ENCODE measurements at regions of chr13 and their contacts with region 1.

Region 1: DNA sequence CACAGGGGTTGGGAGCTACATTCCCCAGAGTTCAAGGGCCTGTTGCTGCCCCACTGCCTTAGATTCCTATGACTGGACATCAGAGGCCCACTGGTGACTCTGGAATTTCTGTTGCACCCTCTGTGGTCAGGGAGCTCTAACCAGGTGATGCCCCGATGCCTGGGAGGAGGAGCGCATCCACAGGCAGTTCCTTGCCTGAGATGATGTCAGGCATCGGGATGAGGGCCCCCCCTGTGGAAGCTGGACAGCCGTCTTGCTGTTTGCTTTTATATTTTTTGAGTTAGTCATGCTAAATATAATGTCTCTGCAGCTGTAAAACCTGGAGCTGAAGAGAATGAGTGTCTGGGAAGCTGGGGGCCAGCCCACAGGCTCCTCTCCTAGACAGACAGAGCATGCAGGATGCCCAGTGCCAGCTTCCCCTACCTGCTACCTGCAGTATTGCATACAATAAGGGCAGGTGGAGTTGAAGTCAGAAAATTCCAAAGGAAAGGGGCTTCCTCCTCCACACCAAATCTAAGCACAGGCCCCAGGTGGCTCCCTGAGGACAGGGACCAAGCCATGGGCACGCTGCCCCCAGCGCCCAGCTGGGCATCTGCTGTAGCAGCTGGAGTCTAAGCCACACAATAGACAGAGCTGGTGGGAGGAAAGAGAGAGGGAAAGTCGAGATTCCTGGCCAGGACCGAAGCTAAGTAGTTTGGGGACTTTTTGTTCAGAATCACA is 16.2 kb downstream of the COL4A2 start:
- DNase-seq: peak in 1 of 2 experiments; percentile 61
- ATAC-seq: peak; percentile 71 to 72
- H3K4me3 ChIP-seq: no peak overlapping the region
- H3K27ac ChIP-seq: peak overlapping the region; percentile 82 to 85
- H3K4me1 ChIP-seq: peaks cover 79% of the 10 kb centered on the region
- CTCF ChIP-seq: no peak
- EP300 ChIP-seq: peak in 1 of 2 experiments; percentile 52; a peak in 1 of 5 replicates
- POLR2A ChIP-seq: no peak
- RAD21 ChIP-seq: no peak; a peak in 1 of 5 replicates

Region 2: GRCh38 chr13:109989155-109989554 is 334.2 kb before region 1 on chr13:
- CTCF ChIA-PET with region 1: no interaction called
- POLR2A ChIA-PET with region 1: no interaction called
- DNase-seq: no peak
- ATAC-seq: no peak
- H3K4me3 ChIP-seq: no peak overlapping the region
- H3K27ac ChIP-seq: no peak overlapping the region
- H3K4me1 ChIP-seq: no peaks in the 10 kb centered on the region
- CTCF ChIP-seq: no peak
- EP300 ChIP-seq: no peak
- POLR2A ChIP-seq: no peak
- RAD21 ChIP-seq: no peak

Region 3: DNA sequence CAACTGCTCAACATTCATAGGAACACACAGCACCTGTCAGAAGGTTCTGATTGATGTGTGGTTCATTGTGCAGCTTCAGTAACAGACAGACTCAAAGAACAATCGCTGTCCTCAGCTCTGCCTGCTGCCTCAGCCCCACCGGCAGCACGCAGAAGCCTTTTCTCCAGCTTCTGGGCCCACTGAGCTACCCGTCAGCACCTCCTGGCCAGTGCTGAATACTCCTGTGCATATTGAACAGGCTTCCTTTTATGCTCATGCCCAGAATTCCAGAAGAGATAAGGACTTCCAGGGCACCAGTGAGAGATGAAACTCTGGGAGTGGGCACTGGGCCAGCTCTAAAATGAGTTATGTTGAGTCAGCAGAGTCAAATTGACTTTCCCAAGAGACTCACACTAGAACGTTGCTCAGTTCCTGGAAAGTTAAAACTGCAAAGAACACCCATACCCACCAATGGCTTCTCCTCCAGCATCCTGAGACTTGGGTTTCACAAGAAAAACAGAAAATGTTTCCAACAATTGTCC is 135.6 kb before region 1 on chr13:
- CTCF ChIA-PET with region 1: no interaction called
- POLR2A ChIA-PET with region 1: no interaction called
- DNase-seq: no peak
- ATAC-seq: no peak
- H3K4me3 ChIP-seq: no peak overlapping the region
- H3K27ac ChIP-seq: no peak overlapping the region
- H3K4me1 ChIP-seq: no peaks in the 10 kb centered on the region
- CTCF ChIP-seq: no peak
- EP300 ChIP-seq: no peak
- POLR2A ChIP-seq: no peak
- RAD21 ChIP-seq: no peak

Region 4: DNA sequence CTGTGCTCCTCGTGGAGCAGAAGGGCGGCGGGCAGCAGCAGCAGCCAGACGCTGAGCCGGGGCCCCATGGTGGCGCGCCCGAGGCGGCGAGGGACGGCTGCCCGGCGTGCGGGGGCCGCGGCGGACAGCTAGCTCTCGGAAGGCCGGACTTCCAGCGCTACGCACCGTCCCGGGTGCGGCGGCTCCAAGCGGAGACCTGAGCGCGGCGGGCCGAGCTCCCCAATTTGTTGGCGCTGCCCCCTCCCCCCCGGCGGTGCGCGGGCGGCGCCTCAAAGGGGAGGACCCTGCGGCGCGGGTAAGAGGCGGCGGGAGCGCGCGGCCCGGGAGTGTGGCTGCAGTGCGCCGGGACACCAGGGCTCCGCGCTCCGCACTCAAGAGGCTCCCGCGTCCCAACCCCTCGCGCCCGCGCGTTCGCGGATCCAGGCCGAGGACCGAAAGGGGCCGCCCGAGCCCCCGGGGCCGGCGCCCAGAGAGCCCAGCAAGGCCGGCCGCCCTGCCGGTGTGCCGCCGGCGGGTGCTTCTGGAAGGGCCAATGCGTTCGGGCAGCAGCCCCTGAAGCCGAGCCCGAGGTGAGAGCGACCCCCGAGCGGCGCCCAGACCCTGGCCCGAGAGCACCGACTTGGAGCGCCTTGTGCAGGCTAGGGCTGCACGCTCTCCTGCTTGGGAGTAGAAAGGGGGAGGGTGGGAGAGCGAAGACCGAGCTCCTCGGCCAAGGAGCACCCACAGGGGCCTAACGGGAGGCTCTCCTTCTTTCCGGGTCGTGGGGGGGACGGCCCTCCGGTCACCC is 16.2 kb before region 1 on chr13 and contains the starts of genes COL4A1 and COL4A2:
- CTCF ChIA-PET with region 1: interaction called, 7 read pairs
- POLR2A ChIA-PET with region 1: interaction called, 15 read pairs
- DNase-seq: peak in 1 of 2 experiments; percentile 49
- ATAC-seq: peak; percentile 76 to 77
- H3K4me3 ChIP-seq: peak within 1 kb of the TSS; percentile 92
- H3K27ac ChIP-seq: peak within 1 kb of the TSS; percentile 93 to 97
- H3K4me1 ChIP-seq: peaks cover 61% of the 10 kb centered on the region
- CTCF ChIP-seq: 0 out of 3 replicates have a peak, but pooled peaks have one; percentile 5
- EP300 ChIP-seq: no peak
- POLR2A ChIP-seq: peak; percentile 74
- RAD21 ChIP-seq: no peak
- polyA plus RNA-seq, gene COL4A1: 23.8 and 24.3 TPM in 2 replicates
- polyA plus RNA-seq, gene COL4A2: 36.2 and 46.9 TPM in 2 replicates

Measured in A549 (cell line).